Right ventricle myocardium superior (tissue), 1 donor: ENCODE measurements at regions of chr5 and their contacts with region 1.

Region 1: DNA sequence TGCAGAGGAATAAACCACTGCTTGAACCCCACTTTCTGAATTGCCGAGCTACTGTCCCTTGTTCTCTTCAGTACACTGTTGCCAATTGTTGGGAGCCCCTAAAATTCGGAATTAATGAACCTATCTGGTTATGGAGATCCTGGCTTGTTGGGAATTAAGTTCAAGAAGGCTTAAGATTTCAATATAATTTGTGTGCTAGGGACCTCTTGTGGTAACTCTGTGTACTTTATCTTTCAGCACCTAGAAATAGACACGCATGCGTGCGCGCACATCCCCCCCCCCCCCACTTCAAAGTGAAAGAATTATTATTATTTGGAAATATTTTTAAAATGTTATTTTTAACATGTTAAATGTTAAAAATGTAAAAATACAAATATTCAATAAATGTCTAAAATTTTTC is 53.3 kb upstream of the FAM169A start:
- DNase-seq: no peak
- ATAC-seq: peak; percentile 71

Region 2: GRCh38 chr5:73902327-73903051 is 1017.0 kb before region 1 on chr5:
- intact Hi-C with region 1: loop called (anchors 10 kb)
- DNase-seq: no peak
- ATAC-seq: peak; percentile 58

Region 3: GRCh38 chr5:74673011-74673790 is 246.3 kb before region 1 on chr5:
- intact Hi-C with region 1: loop called (anchors 10 kb)
- DNase-seq: no peak
- ATAC-seq: peak; percentile 75

Region 4: DNA sequence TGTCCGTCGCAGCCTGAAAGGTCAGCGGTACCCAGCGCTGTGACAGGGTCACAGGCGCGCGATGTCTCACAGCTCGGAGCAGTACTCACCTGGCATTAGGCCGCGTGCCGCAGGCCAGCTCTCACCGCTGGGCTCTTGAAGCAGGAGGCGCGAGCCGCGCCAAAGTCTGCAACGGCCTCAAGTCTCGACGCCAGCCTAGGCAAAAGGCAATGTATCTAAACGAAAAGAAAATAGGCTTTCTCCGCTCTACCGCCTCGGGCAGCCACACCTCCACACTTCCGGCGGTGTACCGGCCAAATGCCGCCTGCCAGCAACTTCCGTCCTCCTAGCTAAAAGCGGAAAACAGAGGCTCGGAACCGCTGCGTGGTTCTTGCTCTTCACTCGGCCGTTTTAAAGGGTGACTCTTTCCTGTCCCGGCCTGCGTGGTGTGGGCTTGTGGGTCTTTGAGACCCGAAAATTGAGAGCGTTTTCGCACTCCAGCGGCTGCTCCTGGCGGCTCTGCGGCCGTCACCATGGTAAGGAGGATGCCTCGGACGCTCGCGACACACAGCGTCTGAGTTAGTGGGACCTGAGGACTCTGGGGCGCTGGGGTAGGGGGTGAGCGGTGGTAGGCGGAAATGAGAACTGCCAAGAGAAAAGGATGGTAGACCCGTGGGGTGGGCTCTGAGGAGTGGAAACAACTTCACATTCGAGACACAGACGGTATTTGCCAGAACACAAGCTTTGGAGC is 152.5 kb before region 1 on chr5 and contains the starts of genes GFM2 and NSA2:
- intact Hi-C with region 1: loop called (anchors 2 kb)
- DNase-seq: peak; percentile 95
- ATAC-seq: peak; percentile 100
- total RNA-seq, gene GFM2: 42.3 TPM
- total RNA-seq, gene NSA2: 35.1 TPM